Colonic mucosa (tissue), 4 donors: ENCODE measurements at regions of chr1 and their contacts with region 1.

Region 1: GRCh38 chr1:234579967-234580366 is 30.0 kb downstream of the IRF2BP2 start:
- DNase-seq: no peak
- H3K4me3 ChIP-seq: no peak overlapping the region
- H3K27ac ChIP-seq: no peak overlapping the region
- H3K4me1 ChIP-seq: no peaks in the 10 kb centered on the region
- H3K27me3 ChIP-seq: no peaks in the 10 kb centered on the region
- CTCF ChIP-seq: no peak

Region 2: GRCh38 chr1:234545859-234546561 is 34.0 kb before region 1 on chr1:
- intact Hi-C with region 1: loop called (anchors 5 kb)
- DNase-seq: no peak
- H3K4me3 ChIP-seq: no peak overlapping the region
- H3K27ac ChIP-seq: no peak overlapping the region
- H3K4me1 ChIP-seq: peaks cover 8% of the 10 kb centered on the region
- H3K27me3 ChIP-seq: no peaks in the 10 kb centered on the region
- CTCF ChIP-seq: no peak

Region 3: GRCh38 chr1:234743791-234744611 is 164.0 kb after region 1 on chr1:
- intact Hi-C with region 1: no loop called
- DNase-seq: no peak
- H3K4me3 ChIP-seq: no peak overlapping the region
- H3K27ac ChIP-seq: no peak overlapping the region
- H3K4me1 ChIP-seq: no peaks in the 10 kb centered on the region
- H3K27me3 ChIP-seq: no peaks in the 10 kb centered on the region
- CTCF ChIP-seq: no peak